ENCODE measurements at regions of chr18 and their contacts with region 1.

Region 1: GRCh38 chr18:47628240-47628781 is 302.1 kb downstream of the SMAD2 start:
- DNase-seq: no peak
- ATAC-seq: no peak
- H3K4me3 ChIP-seq: no peak overlapping the region
- H3K27ac ChIP-seq: no peak overlapping the region
- H3K4me1 ChIP-seq: no peaks in the 10 kb centered on the region
- H3K27me3 ChIP-seq: no peaks in the 10 kb centered on the region

Region 2: DNA sequence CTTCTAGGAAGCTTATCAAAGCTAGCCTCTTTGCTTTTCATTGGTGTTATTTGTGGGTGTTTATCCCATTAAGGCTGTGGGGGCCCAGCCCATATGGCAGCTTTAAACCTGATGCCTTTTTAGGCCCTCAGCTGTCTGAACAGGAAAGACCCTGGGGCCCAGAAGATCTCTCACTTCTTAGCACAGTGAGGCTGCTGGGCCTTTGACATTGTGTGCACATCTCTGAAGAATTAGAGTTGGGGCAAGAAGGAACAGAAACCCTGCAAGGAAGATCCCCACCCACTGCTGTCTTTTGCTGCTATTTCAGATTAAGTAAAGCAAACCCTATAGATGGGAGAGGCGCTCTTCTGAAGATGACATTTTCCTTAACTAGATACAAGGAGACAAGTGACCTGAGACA is 52.2 kb after region 1 on chr18:
- intact Hi-C with region 1: loop called in 1 of 2 experiments (anchors 10 kb)
- DNase-seq: no peak
- ATAC-seq: no peak
- H3K4me3 ChIP-seq: no peak overlapping the region
- H3K27ac ChIP-seq: no peak overlapping the region
- H3K4me1 ChIP-seq: no peaks in the 10 kb centered on the region
- H3K27me3 ChIP-seq: no peaks in the 10 kb centered on the region